ENCODE measurements at regions of chr17 and their contacts with region 1.

Region 1: DNA sequence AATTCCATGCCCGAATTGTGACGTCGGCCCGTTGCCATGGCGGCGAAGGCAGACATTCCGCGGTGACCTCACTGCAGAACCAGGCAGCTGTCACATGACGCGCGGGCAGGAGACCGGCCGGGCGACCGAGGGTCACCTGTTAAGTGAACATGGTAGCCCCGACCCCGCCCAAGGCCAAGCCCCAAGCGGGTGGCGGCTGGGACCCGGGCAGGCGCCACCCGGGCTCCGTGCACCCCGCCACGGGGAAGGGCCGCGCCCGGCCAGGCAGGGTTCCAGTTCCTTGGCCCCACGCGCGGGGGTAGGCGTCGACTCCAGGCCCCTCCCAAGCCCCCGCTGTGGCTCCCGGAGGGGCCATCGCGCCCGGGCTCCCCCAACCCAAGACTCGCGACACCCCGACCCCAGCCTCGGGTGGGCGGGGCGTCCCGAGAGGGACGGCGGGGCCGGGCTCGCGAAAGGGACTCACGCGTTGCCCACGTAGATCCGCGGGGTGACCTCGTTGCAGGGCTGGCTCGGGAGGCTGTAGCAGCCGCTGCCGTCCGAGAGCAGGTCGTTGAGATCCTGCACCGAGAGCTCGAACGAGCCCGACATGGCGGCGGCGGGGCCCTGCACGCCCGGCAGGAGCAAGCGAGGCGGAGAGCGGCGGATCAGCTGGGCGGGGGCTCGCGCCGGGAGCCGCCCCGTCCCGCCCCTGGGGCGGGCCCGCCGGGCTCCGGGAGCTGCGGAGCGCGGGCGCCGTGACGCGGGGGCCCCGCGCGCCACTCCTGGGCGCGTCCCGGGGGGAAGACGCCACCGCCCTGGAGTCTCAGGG is at the start of gene DUSP3:
- H3K4me3 Mint-ChIP-seq: peak within 1 kb of the TSS; percentile 89
- H3K27ac Mint-ChIP-seq: peak within 1 kb of the TSS; percentile 92
- H3K4me1 Mint-ChIP-seq: peaks cover 90% of the 10 kb centered on the region
- H3K27me3 Mint-ChIP-seq: no peaks in the 10 kb centered on the region

Region 2: DNA sequence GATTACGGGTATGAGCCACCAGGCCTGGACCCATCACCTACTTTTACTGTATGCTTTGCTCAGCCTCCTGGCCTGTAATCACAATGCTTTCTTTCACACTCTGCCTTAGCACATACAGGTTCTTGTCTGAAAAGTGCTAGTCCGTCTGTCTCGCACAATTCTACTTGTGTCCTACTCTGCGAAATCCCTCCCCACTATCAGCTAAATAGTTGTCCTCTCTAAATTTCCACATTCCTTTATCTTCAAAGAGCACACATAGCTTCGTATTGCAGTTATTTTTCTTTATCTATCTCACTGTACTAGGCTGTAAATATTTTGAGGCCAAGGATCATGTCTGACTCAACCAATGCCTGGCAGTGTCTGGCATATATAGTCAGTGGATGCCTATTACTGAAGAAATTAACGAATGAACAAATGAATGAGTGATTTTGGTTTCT is 193.9 kb before region 1 on chr17:
- intact Hi-C with region 1: no loop called
- H3K4me3 Mint-ChIP-seq: no peak overlapping the region
- H3K27ac Mint-ChIP-seq: no peak overlapping the region
- H3K4me1 Mint-ChIP-seq: peaks cover 6% of the 10 kb centered on the region
- H3K27me3 Mint-ChIP-seq: peaks cover 23% of the 10 kb centered on the region

Region 3: DNA sequence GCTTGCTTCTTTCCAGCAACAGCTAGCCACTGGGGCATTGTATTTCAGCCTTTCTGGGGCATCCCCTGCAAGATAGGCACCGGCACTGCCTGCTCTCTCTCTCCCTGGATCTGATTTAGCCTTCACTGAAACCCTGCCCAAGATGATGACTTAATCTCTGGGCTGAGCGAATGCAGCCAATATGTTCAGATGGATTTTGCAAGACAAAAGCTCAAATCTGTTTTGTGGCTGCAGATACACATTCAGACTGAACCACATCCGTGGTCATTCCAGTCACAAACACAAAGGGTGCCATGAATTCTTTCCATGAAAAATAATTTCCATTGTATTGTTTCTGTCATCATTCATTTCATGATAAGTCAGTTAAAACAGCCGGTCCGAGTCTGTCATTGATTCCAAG is 44.2 kb before region 1 on chr17:
- intact Hi-C with region 1: no loop called
- H3K4me3 Mint-ChIP-seq: no peak overlapping the region
- H3K27ac Mint-ChIP-seq: no peak overlapping the region
- H3K4me1 Mint-ChIP-seq: no peaks in the 10 kb centered on the region
- H3K27me3 Mint-ChIP-seq: peaks cover 16% of the 10 kb centered on the region

Region 4: GRCh38 chr17:43832976-43833829 is 54.7 kb after region 1 on chr17 and contains the start of gene MPP3:
- intact Hi-C with region 1: loop called (anchors 5 kb)
- H3K4me3 Mint-ChIP-seq: peak within 1 kb of the TSS; percentile 74
- H3K27ac Mint-ChIP-seq: peak within 1 kb of the TSS; percentile 37
- H3K4me1 Mint-ChIP-seq: peaks cover 29% of the 10 kb centered on the region
- H3K27me3 Mint-ChIP-seq: peaks cover 34% of the 10 kb centered on the region

Region 5: DNA sequence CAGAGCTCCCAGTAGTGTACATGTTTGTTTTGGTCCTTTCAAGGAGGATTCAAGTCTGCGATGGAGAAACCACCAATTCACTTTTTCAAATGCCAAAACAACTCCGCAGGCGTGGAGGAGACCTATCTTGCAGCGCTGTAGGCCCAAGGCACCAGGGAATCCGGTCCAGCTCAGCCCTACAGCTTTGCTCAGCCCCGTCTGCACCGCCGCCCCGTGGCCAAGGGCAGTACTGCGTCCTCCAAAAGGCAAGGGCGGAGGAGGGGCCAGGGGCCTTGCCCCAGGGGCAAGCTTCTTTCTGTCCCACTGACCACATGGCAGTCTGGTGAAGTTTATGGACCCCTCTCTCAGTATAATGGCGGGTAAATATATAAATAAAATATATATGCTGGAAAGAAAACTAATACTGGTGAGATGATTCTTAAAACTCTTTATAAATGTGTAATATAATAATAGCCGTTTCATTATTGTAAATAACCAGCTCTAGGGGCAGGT is 67.7 kb after region 1 on chr17:
- intact Hi-C with region 1: loop called (anchors 5 kb)
- H3K4me3 Mint-ChIP-seq: no peak overlapping the region
- H3K27ac Mint-ChIP-seq: peak overlapping the region; percentile 37
- H3K4me1 Mint-ChIP-seq: peaks cover 33% of the 10 kb centered on the region
- H3K27me3 Mint-ChIP-seq: peaks cover 29% of the 10 kb centered on the region

Region 6: DNA sequence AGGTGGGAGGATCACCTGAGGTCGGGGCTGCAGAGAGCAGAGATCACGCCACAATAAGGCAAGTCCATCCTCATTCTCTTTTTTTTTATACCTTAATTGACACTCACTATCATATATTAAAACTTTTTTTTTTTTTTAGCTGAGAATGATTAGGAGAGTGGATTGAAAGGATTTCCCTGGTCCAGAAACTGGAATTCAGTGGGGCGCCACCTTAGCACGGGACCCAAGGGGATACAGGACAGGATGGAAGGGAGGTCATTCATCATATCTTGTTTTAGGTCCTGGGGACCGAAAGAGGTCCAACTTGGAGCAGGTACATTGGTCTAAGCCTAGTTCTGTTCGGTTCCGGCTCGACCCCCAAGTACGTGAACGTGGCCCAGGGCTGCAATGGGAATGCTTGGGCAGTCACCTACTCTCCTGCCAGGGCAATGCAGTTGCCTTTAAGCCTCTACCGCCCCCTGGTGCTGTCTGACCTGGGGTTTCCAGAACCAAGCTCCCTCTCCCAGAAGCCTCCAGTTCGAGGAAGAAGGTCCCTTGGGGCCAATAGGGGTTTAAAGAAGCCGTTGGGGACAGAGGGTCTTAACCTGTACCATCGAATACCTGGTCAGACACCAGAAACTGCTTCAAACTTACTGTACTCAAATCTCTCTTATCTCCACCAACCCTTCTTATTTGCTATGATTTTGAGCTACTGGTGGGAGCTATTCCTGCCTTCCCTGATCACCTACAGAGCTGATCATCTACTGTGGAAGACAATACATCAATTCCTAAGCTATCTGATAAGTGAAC is 744.5 kb after region 1 on chr17:
- intact Hi-C with region 1: no loop called
- H3K4me3 Mint-ChIP-seq: no peak overlapping the region
- H3K27ac Mint-ChIP-seq: no peak overlapping the region
- H3K4me1 Mint-ChIP-seq: no peaks in the 10 kb centered on the region
- H3K27me3 Mint-ChIP-seq: peaks cover 19% of the 10 kb centered on the region